Activated naive CD4-positive, alpha-beta T cell treated with anti-CD3 and anti-CD28 coated beads for 36 hours (primary cell): ENCODE measurements at regions of chr16 and their contacts with region 1.

Region 1: GRCh38 chr16:2682209-2683021 is at the start of gene KCTD5:
- DNase-seq: peak; percentile 98
- H3K4me3 Mint-ChIP-seq: peak within 1 kb of the TSS; percentile 97
- H3K27ac Mint-ChIP-seq: peak within 1 kb of the TSS; percentile 93
- H3K4me1 Mint-ChIP-seq: peaks cover 22% of the 10 kb centered on the region
- H3K27me3 Mint-ChIP-seq: no peaks in the 10 kb centered on the region
- total RNA-seq, gene KCTD5: 21.8 to 24.1 TPM

Region 2: DNA sequence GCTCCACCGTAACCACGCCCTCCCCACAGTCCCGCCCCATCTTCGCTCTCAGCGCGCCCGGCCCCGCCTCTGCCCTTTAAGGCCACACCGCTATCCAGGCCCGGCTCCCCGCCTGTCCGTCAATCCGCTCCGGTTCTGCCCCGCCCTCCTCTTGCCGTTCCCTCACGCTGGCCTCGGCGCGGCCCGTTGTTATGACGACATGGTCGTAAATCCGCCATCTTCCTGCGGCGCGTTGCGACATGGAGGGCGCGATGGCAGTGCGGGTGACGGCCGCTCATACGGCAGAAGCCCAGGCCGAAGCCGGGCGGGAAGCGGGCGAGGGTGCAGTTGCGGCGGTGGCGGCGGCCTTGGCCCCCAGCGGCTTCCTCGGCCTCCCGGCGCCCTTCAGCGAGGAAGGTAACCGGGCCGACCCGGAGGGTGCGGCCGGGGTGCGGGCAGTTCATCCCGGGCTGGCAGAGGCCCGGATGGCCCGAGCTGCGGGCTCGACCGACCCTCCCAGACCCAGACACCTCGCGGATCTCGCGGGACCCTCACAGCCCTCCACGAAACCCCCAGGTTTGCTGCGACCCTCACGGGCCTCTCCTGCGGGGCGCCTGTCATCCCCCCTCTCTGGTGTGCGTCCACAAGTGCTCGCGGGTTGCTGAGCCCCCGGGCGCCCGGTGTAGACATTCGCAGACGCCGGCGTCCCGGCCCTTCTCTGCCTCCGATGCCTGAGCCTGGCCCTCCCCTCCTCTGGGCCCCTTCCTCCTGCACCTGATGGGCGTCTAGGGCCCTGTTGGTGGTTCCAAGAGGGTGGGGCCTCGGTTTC is 458.8 kb before region 1 on chr16 and contains the start of gene E4F1:
- CTCF ChIA-PET with region 1: no interaction called
- intact Hi-C with region 1: loop called (anchors 5 kb)
- DNase-seq: peak; percentile 100
- H3K4me3 Mint-ChIP-seq: peak within 1 kb of the TSS; percentile 78
- H3K27ac Mint-ChIP-seq: peak within 1 kb of the TSS; percentile 18
- H3K4me1 Mint-ChIP-seq: peaks cover 22% of the 10 kb centered on the region
- H3K27me3 Mint-ChIP-seq: no peaks in the 10 kb centered on the region
- total RNA-seq, gene E4F1: 21.2 to 21.7 TPM

Region 3: GRCh38 chr16:2720719-2721633 is 38.6 kb after region 1 on chr16:
- CTCF ChIA-PET with region 1: no interaction called
- intact Hi-C with region 1: loop called (anchors 1 kb)
- DNase-seq: peak; percentile 92
- H3K4me3 Mint-ChIP-seq: peak overlapping the region; percentile 82
- H3K27ac Mint-ChIP-seq: peak overlapping the region; percentile 85
- H3K4me1 Mint-ChIP-seq: no peaks in the 10 kb centered on the region
- H3K27me3 Mint-ChIP-seq: peaks cover 2% of the 10 kb centered on the region

Region 4: DNA sequence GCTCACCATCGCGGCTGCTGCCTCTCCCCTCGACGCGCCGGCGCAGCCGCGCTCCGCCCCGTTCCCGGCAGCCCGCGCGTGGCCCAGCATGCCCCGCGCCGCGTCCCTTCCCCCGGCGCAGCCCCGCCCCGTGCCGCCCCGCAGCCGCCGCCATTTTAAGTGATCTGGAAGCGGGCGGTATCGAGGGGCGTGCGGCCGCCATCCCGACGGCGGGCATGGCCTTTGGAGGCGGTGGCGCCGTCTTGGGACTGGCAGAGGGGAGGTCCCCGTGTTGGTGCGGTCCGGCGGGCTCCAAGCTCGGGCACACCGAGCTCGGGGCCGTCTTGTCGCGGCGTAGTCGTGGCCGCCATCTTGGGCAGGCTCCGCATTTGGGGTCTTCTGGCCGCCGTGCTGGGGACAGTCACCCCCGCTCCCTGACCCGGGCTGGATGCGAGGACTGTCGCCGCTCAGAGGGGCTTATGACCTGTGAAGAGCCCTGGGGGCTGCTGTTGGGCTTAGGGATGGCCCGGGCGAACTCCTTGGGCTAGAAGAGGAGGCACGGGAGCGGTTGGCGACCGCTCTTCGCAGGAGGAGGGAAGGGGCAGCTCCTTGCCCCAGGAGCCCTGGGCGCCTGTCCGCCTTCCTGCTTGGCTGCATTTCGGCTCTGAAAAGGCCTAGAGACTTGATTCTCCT is 95.0 kb after region 1 on chr16 and contains the start of gene ELOB:
- CTCF ChIA-PET with region 1: no interaction called
- intact Hi-C with region 1: loop called (anchors 5 kb)
- DNase-seq: peak; percentile 91
- H3K4me3 Mint-ChIP-seq: peak within 1 kb of the TSS; percentile 94
- H3K27ac Mint-ChIP-seq: peak within 1 kb of the TSS; percentile 96
- H3K4me1 Mint-ChIP-seq: peaks cover 31% of the 10 kb centered on the region
- H3K27me3 Mint-ChIP-seq: no peaks in the 10 kb centered on the region
- total RNA-seq, gene ELOB: 177 to 189 TPM

Region 5: GRCh38 chr16:3023669-3024478 is 341.5 kb after region 1 on chr16 and contains the starts of genes HCFC1R1 and THOC6:
- CTCF ChIA-PET with region 1: no interaction called
- intact Hi-C with region 1: no loop called
- DNase-seq: peak; percentile 98
- H3K4me3 Mint-ChIP-seq: peak within 1 kb of the TSS; percentile 95
- H3K27ac Mint-ChIP-seq: peak within 1 kb of the TSS; percentile 98
- H3K4me1 Mint-ChIP-seq: peaks cover 50% of the 10 kb centered on the region
- H3K27me3 Mint-ChIP-seq: peaks cover 6% of the 10 kb centered on the region
- total RNA-seq, gene HCFC1R1: 22.6 to 26.8 TPM
- total RNA-seq, gene THOC6: 40.6 to 41.0 TPM